ENCODE measurements at regions of chr7 and their contacts with region 1.

Region 1: GRCh38 chr7:113120647-113121046 is 2.3 kb upstream of the SMIM30 start:
- DNase-seq: no peak
- CTCF ChIP-seq: no peak

Region 2: GRCh38 chr7:113131367-113131766 is 10.7 kb after region 1 on chr7:
- CTCF ChIA-PET with region 1: interaction called, 11 read pairs
- POLR2A ChIA-PET with region 1: no interaction called
- DNase-seq: no peak
- CTCF ChIP-seq: no peak

Measured in GM10248 (cell line).